ENCODE measurements at regions of chr1 and their contacts with region 1.

Region 1: GRCh38 chr1:113928941-113929749 is at the start of gene HIPK1:
- DNase-seq: peak; percentile 62 to 83
- ATAC-seq: peak; percentile 90
- H3K4me3 ChIP-seq: peak within 1 kb of the TSS; percentile 96
- H3K27ac ChIP-seq: peak within 1 kb of the TSS; percentile 84 to 97
- H3K4me1 ChIP-seq: peaks cover 21% of the 10 kb centered on the region
- CTCF ChIP-seq: no peak
- EP300 ChIP-seq: no peak
- POLR2A ChIP-seq: peak; percentile 50
- RAD21 ChIP-seq: no peak; a peak in 1 of 5 replicates
- polyA plus RNA-seq, gene HIPK1: 27.4 and 35.9 TPM in 2 replicates

Region 2: DNA sequence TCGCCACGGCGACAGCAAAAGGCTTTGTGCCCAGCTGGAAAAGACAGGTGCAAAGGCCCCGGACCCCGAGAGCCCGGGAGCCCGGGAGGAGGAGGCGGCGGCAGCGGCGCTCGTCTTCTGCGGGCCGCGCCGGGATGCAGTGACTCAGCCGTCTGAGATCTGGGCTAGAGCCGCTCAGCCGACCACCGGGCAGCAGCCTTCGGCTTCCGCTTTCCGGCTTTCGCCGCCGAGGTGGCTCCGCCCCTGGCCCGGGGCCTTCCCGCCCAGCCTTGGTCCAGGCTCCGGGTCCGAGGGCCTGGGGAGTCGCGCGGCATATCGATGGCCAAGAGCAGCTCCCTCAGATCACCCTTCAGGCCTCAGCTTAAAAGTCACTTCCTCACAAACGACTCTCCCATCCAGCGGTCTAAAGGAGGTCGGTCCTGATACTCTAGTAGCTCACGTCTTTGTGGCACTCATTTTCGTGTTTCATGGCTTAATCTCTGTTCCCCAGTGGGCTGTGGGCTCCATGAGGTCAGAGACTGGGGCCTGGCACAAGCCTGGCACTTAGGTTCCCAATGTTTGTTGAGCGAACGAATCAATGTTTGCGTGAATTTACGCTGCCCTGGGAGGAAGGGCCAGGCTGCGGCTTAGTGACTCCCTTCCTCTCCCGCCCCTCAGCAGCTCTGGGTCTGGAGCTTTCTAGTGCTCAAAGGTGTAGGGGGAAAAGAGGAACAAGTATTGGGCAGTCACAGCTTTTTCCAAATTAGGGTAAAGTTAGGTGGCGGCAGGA is 169.6 kb before region 1 on chr1 and contains the start of gene PHTF1:
- CTCF ChIA-PET with region 1: interaction called, 5 read pairs
- POLR2A ChIA-PET with region 1: interaction called, 11 read pairs
- DNase-seq: peak; percentile 47 to 70
- ATAC-seq: peak; percentile 94 to 95
- H3K4me3 ChIP-seq: peak within 1 kb of the TSS; percentile 92
- H3K27ac ChIP-seq: peak within 1 kb of the TSS; percentile 89 to 97
- H3K4me1 ChIP-seq: peaks cover 12% of the 10 kb centered on the region
- CTCF ChIP-seq: no peak
- EP300 ChIP-seq: no peak
- POLR2A ChIP-seq: peak; percentile 64
- RAD21 ChIP-seq: no peak; a peak in 1 of 5 replicates
- polyA plus RNA-seq, gene PHTF1: 11.9 and 17.0 TPM in 2 replicates

Region 3: DNA sequence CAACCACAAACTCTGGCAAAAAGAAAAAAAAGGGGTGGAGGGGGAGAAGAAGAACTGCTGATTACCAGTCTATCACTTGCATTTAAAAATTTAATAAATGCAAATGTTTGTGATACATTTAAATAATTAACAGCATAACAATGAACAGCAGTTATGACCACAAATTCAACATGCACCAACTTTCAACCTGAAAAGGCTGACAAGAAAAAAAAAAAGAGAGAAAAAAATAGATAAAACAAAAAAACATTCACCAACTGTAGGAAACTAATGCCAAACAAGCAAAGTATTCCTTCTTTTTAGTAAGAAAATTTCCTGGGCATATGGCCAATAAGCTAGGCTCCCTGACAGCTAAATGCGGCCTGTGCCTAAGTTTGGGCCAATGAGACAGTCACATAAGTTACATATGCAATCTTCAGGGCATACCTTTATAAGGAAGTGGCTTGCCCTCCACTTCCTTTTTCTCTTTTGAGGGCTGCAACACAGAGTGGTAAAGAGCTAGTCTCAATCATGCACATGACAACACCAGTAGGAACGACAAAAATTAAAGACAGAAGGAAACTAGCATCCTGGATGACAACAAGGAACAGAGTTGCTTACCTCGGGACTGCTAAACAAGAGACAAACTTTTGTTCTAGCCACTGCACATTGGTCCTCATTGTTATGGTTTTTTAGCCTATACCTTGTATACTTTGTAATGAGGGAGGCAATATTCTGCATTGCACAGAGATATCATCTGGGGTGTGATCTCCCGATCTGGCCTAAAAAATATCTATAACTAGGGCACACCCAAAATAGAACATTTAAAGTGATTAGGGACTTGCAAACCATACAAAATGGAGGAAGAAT is 145.7 kb before region 1 on chr1:
- CTCF ChIA-PET with region 1: no interaction called
- POLR2A ChIA-PET with region 1: no interaction called
- DNase-seq: no peak
- ATAC-seq: no peak
- H3K4me3 ChIP-seq: no peak overlapping the region
- H3K27ac ChIP-seq: no peak overlapping the region
- H3K4me1 ChIP-seq: peaks cover 17% of the 10 kb centered on the region
- CTCF ChIP-seq: no peak
- EP300 ChIP-seq: no peak
- POLR2A ChIP-seq: no peak
- RAD21 ChIP-seq: no peak

Region 4: GRCh38 chr1:113904674-113905434 is 24.3 kb before region 1 on chr1 and contains the starts of genes AP4B1 and DCLRE1B:
- CTCF ChIA-PET with region 1: interaction called, 9 read pairs
- POLR2A ChIA-PET with region 1: interaction called, 32 read pairs
- DNase-seq: peak; percentile 86 to 99
- ATAC-seq: peak; percentile 95 to 96
- H3K4me3 ChIP-seq: peak within 1 kb of the TSS; percentile 77
- H3K27ac ChIP-seq: peak within 1 kb of the TSS; percentile 83 to 92
- H3K4me1 ChIP-seq: peaks cover 9% of the 10 kb centered on the region; the same call in 1 of the 3 replicates
- CTCF ChIP-seq: peak; percentile 40
- EP300 ChIP-seq: no peak
- POLR2A ChIP-seq: peak; percentile 76
- RAD21 ChIP-seq: peak; percentile 61 to 76
- polyA plus RNA-seq, gene AP4B1: 11.9 and 12.0 TPM in 2 replicates
- polyA plus RNA-seq, gene DCLRE1B: 4.8 and 6.3 TPM in 2 replicates

Measured in A549 (cell line).